AG04450 (cell line): ENCODE measurements at regions of chr10 and their contacts with region 1.

Region 1: DNA sequence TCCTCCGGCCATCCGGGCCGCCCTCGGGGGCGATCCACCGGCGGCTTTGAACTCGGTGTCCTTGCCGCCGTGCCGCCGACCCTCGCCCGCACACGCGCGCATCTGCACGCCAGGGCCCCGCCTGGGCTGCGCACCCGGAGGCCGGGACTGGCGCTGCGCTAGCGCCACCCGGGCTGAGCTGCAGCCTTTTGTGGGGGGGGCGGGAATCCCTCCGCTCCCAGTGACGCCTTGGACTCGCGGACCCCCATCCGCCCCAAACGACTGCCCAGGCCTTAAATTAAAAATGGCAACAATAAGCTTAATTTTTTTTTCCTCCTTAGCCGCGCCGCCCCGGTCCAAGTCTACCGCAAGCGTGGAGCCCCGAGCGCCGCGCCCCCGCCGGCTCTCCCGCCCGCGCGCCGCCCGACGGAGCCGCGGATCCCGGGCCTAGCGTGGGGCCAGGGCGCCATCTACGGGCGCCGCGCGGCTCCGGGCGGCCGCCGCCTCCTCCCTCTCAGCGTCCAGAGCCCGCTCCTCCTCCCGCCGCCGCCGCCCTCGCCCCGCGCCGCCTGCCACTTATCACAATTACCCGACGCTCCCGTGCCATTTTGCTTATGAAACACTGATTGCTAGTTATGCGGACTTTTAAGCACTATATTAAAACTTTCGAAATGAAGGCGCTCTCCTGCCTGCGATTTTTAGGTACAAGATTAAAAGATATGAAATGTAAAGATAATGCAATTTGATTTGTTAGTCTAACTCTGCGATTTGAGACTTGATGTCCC is 7.5 kb upstream of the EBF3 start:
- DNase-seq: no peak
- H3K4me3 ChIP-seq: no peak overlapping the region
- H3K27ac ChIP-seq: no peak overlapping the region
- H3K27me3 ChIP-seq: peaks cover 59% of the 10 kb centered on the region
- CTCF ChIP-seq: 0 out of 2 replicates have a peak, but pooled peaks have one; percentile 20

Region 2: DNA sequence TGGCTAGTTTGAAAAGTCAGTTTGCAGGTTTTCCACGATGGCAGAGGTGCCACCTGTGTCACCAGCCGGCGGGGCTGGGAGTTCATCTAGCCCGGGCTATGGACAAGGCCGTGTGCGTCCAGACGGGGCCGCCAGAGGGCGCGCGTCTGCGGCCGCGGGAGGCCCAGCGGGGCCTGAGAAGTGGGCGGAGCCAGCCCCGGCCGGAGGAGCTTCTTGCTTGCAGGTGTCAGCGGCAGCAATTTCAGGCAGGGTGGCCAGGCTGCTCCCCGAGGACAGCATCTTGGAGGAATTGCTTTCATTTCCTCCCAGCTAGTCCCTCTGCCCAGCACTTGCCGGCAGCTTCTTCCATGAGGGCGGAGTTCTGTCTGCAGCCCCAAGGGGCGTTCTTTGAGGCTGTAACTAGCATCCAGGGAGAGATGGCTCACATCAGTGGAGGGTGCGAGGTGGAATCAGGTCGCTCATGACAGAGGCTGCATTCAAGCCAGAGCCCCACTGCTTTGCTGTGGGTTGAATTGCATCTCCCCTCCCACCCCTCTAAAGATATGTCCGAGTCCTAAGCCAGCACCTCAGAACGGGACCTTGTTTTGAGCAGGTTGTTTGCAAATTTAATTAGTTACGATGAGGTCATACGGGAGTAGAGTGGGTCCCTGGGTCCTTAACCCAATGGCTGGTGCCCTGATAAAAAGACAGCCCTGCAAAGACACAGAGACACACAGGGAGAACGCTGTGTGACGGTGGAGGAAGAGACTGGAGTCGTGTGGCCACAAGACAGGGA is 1759.4 kb before region 1 on chr10:
- CTCF ChIA-PET with region 1: interaction called, 30 read pairs
- POLR2A ChIA-PET with region 1: no interaction called
- DNase-seq: peak; percentile 2
- H3K4me3 ChIP-seq: 0 out of 2 replicates have a peak overlapping the region, but pooled peaks have one; percentile 10
- H3K27ac ChIP-seq: no peak overlapping the region
- H3K27me3 ChIP-seq: no peaks in the 10 kb centered on the region
- CTCF ChIP-seq: peak; percentile 73

Region 3: DNA sequence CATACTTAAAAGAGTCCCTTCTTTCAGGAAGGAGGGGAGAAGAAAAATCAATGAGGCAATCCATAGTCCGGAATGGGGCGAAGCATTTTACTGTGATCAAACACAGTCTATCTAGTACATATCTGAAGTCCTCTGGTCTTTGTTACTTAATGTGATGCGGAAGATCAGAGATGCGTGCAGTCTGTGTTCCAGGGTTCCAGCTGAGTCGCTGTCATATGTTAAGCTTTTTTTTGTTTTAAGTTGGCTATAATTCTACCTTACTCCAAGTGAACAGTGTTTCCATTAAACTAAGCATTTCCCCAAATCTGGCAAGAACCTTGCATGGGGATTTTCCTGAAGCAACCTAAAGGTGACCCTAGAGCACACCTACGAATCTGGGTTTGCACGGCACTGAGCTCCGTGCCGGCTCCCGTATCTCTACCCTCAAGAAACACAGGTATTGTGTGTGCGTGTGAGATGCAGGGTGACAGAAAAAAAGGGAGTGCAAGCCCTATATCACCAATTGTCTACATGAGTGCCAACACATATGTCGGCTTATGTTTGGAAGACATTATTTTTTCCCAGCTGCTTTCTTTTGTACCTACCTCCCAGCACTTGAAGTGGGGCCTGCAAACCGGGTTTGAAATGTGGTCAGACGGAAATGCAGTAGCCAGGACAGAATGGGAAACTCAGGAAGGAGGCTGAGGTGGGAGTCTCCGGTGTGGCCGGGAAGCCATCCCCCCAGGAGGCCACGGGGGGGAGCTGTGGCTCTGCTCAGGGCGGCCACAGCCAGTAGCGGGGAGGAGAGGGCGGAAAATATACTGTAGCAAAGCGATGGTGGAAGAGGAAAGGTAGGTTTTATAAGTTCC is 940.3 kb before region 1 on chr10:
- CTCF ChIA-PET with region 1: interaction called, 19 read pairs
- POLR2A ChIA-PET with region 1: no interaction called
- DNase-seq: no peak
- H3K4me3 ChIP-seq: no peak overlapping the region
- H3K27ac ChIP-seq: no peak overlapping the region
- H3K27me3 ChIP-seq: no peaks in the 10 kb centered on the region
- CTCF ChIP-seq: peak; percentile 69